Astrocyte of the cerebellum (primary cell): ENCODE measurements at regions of chr6 and their contacts with region 1.

Region 1: DNA sequence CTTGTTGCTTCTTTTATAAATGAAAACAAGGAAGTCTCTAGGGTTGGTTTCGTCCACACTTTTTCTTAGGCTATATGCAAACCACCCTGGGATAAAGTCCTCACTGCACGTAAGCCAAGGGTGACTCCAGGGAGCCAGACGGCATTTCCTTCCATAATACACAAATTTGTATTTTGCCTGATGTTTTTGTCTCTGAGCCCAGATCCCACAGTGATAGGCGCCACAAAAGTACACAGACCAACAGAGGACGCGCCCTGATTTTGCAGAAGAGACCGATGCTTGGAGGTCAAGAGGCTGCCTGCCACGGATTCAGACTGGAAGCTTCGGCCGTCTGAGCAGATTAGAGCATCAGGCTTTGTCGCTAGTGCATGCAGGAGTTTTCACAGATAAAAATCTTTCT is 22.8 kb downstream of the FOXQ1 start:
- DNase-seq: no peak
- H3K4me3 ChIP-seq: no peak overlapping the region
- CTCF ChIP-seq: no peak

Region 2: DNA sequence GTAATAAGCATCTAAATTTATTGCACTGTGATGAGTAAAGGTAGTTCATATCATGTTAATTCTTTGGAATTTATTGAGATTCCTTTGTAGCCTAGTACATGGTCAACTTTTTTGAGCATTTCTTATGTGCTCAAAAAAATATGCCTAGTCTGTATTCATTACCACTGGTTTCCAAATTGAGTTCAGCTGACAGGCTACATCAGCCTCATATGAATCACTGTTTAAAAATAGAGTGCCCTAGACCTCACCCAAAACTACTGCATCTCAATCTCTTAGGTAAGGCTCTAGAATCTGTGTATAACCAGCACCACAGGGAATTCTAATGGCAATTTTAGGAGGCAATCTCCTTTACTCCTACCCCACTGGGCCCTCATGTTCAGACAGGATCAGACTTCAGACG is 38.0 kb after region 1 on chr6:
- in situ Hi-C with region 1: loop called (anchors 5 kb)
- DNase-seq: no peak
- H3K4me3 ChIP-seq: no peak overlapping the region
- CTCF ChIP-seq: no peak